ENCODE measurements at regions of chr20 and their contacts with region 1.

Region 1: DNA sequence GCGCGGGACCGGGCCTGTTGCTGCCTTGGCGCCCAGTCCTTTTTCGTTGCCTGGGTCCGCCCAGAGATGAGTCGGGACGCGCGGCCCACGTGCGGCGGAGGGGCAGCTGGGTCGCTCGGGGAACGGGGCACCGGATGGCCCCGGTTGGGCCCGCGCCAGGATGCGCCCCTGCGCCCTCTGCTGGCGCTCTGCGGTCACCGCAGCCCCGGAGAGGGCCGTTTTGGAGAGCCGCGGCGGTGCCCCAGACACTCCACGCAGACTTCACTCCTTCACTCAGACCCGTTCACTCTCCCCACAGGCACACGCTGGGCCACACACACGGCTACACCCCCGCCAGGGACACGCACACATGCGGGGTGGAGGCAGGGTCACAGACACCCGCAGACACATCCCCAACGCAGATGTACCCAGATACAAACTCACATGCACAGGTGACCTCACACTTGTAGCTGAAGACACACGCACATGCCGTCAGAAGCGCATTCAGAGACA is 38.8 kb downstream of the SRC start:
- DNase-seq: peak; percentile 47 to 79
- ATAC-seq: peak; percentile 16 to 21; a peak in 5 of 6 replicates
- H3K4me3 ChIP-seq: peak overlapping the region; percentile 55
- H3K27ac ChIP-seq: peak overlapping the region; percentile 96 to 98
- H3K4me1 ChIP-seq: peaks cover 86% of the 10 kb centered on the region
- CTCF ChIP-seq: peak; percentile 82
- EP300 ChIP-seq: no peak
- POLR2A ChIP-seq: no peak
- RAD21 ChIP-seq: peak; percentile 33 to 68; a peak in 4 of 5 replicates

Region 2: DNA sequence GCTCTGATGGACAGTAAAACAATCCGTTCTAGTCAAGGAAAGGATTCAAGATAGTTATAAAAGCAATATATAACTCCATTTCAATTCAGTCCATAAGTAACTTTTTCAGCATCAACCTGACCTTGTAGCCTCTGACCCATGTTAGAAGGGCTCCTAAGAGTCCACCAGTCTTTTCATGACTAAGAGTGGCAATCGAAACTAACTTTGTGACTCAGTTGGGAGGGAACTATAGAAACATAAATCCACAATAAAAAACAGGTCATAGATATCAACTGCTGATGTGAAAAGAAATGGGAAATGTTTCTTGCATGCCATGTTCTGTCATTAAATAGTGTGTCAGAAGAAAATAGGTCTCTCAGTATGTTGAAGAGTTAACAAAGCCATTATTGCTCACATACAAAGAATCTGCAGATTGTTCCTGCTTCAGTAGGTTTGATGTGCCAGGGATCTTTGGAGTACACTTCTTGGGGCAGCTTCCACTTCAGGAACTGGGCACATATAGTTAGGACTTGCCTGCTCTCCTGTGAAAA is 272.7 kb before region 1 on chr20:
- CTCF ChIA-PET with region 1: no interaction called
- POLR2A ChIA-PET with region 1: no interaction called
- DNase-seq: no peak
- ATAC-seq: no peak
- H3K4me3 ChIP-seq: no peak overlapping the region
- H3K27ac ChIP-seq: no peak overlapping the region
- H3K4me1 ChIP-seq: no peaks in the 10 kb centered on the region
- CTCF ChIP-seq: no peak
- EP300 ChIP-seq: no peak
- POLR2A ChIP-seq: no peak
- RAD21 ChIP-seq: no peak

Region 3: GRCh38 chr20:37282556-37282955 is 102.2 kb before region 1 on chr20:
- CTCF ChIA-PET with region 1: interaction called, 113 read pairs
- POLR2A ChIA-PET with region 1: no interaction called
- DNase-seq: peak in 1 of 2 experiments; percentile 79
- ATAC-seq: peak; percentile 83 to 86
- H3K4me3 ChIP-seq: no peak overlapping the region
- H3K27ac ChIP-seq: peak overlapping the region; percentile 20 to 73; a peak in 5 of 6 replicates
- H3K4me1 ChIP-seq: peaks cover 8% of the 10 kb centered on the region; the same call in 2 of the 3 replicates
- CTCF ChIP-seq: peak; percentile 57
- EP300 ChIP-seq: no peak
- POLR2A ChIP-seq: no peak
- RAD21 ChIP-seq: peak; percentile 73 to 88

Region 4: GRCh38 chr20:37345339-37346230 is 39.1 kb before region 1 on chr20 and contains the start of gene SRC:
- CTCF ChIA-PET with region 1: interaction called, 28 read pairs
- POLR2A ChIA-PET with region 1: interaction called, 23 read pairs
- DNase-seq: peak; percentile 68 to 83
- ATAC-seq: peak; percentile 54 to 70
- H3K4me3 ChIP-seq: peak within 1 kb of the TSS; percentile 89
- H3K27ac ChIP-seq: peak within 1 kb of the TSS; percentile 99 to 100
- H3K4me1 ChIP-seq: peaks cover 68% of the 10 kb centered on the region
- CTCF ChIP-seq: no peak
- EP300 ChIP-seq: no peak
- POLR2A ChIP-seq: peak; percentile 80
- RAD21 ChIP-seq: no peak; a peak in 2 of 5 replicates
- polyA plus RNA-seq, gene SRC: 154 and 212 TPM in 2 replicates

Region 5: DNA sequence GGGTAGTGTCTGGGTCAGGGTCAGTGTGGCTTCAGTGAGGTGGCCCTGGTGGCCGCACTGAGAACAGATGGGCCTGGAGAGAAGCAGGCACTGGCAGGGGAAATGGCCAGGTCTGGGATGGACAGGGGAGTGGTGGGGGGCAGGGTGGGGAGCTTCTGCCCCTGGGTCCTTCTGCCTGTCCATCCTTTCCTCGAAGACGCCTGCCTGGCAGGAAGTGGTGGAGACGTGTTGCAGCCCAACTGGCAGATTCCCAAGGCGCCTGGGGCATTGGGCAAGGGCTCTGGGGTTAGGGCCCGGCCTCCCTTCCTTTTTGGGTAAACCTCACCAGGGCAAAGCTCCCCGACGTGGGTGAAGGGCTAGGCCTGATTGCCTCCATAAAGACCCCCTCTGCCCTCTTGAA is 28.3 kb before region 1 on chr20:
- CTCF ChIA-PET with region 1: interaction called, 19 read pairs
- POLR2A ChIA-PET with region 1: no interaction called
- DNase-seq: peak in 1 of 2 experiments; percentile 42
- ATAC-seq: peak; percentile 36 to 41; a peak in 5 of 6 replicates
- H3K4me3 ChIP-seq: no peak overlapping the region
- H3K27ac ChIP-seq: peak overlapping the region; percentile 69 to 85
- H3K4me1 ChIP-seq: peaks cover 85% of the 10 kb centered on the region
- CTCF ChIP-seq: no peak
- EP300 ChIP-seq: no peak
- POLR2A ChIP-seq: no peak
- RAD21 ChIP-seq: no peak

Region 6: DNA sequence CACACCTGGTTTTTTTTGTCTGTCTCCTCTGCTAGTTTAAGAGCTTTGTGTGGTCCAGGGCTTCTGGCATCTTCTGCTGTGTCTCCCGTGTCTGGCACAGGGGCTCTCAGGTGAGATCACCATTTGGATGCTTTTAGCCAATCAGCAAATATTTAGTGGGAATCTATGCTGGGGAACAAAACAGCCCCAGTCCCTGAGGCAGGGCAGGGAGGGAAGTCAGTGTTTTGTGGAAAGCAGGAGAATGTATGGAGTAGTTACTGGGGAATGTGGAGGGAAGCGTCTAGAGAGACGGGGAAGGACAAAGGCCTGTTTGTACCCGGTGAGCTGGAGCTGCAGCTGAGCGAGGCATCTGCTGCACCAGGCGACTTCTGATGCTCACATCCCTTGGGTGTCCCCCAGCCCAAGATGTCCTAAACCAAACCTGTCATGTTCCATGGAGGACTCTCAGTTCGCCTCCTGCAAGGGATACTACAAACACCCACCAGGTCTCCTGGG is 87.1 kb after region 1 on chr20:
- CTCF ChIA-PET with region 1: no interaction called
- POLR2A ChIA-PET with region 1: no interaction called
- DNase-seq: no peak
- ATAC-seq: no peak
- H3K4me3 ChIP-seq: no peak overlapping the region
- H3K27ac ChIP-seq: no peak overlapping the region
- H3K4me1 ChIP-seq: no peaks in the 10 kb centered on the region
- CTCF ChIP-seq: no peak
- EP300 ChIP-seq: no peak
- POLR2A ChIP-seq: no peak
- RAD21 ChIP-seq: no peak